Ovary (tissue), 10 donors: ENCODE measurements at regions of chr3 and their contacts with region 1.

Region 1: GRCh38 chr3:110773413-110773954 is 298.1 kb upstream of the NECTIN3 start:
- DNase-seq: no peak
- H3K4me3 ChIP-seq: no peak overlapping the region
- H3K27ac ChIP-seq: no peak overlapping the region
- H3K4me1 ChIP-seq: no peaks in the 10 kb centered on the region
- H3K27me3 ChIP-seq: no peaks in the 10 kb centered on the region
- CTCF ChIP-seq: no peak
- EP300 ChIP-seq: no peak
- POLR2A ChIP-seq: no peak

Region 2: DNA sequence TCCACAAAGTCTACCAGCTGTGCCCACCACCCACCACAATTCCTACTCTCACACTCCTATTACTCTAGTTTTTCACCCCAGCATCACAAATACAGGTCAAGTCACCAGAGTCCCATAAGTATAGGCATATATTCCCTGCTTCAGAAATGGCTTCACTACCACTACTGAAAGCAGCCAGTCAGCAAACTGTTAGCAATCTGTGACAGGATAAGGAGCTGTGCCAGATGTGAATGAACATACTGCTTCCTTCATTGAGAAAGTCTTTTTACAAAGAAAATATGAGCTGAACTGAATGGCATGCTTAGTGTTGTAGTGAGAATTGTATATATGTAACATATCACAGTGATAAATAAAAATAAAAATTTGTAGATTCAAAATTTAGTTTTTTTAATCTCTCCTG is 1560.2 kb before region 1 on chr3:
- intact Hi-C with region 1: no loop called
- DNase-seq: no peak
- H3K4me3 ChIP-seq: no peak overlapping the region
- H3K27ac ChIP-seq: no peak overlapping the region
- H3K4me1 ChIP-seq: no peaks in the 10 kb centered on the region
- H3K27me3 ChIP-seq: peaks cover 3% of the 10 kb centered on the region
- CTCF ChIP-seq: no peak
- EP300 ChIP-seq: no peak
- POLR2A ChIP-seq: no peak

Region 3: GRCh38 chr3:110811050-110811449 is 37.6 kb after region 1 on chr3:
- intact Hi-C with region 1: loop called in 1 of 4 experiments (anchors 1 kb)
- DNase-seq: no peak
- H3K4me3 ChIP-seq: no peak overlapping the region
- H3K27ac ChIP-seq: no peak overlapping the region
- H3K4me1 ChIP-seq: peaks cover 2% of the 10 kb centered on the region
- H3K27me3 ChIP-seq: no peaks in the 10 kb centered on the region
- CTCF ChIP-seq: no peak
- EP300 ChIP-seq: no peak
- POLR2A ChIP-seq: no peak

Region 4: DNA sequence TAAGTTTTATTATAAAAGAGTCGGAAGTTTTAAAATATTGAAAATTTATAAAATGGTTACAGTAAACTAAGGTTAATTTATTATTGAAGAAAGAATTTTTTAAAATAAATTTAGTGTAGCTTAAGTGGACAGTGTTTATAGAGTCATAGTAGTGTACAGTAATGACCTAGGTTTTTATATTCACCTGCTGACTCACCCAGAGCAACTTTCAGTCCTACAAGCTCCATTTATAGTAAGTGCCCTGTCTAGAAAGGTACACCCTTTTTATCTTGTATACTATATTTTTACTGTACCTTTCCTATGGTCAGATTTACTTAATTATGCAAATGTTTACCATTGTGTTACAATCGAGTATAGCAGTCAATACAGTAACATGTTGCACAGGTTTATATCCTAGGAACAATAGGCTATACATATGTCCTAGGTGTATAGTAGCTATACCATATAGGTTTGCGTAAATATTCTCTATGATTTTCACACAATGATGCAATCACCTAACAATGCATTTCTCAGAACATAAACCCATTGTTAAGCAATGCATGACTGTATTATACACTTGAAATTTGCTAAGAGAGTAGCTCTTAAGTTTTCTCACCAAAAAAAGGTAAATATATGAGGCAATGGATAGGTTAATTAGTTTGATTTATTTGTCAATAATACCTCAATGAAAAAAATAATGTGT is 661.6 kb after region 1 on chr3:
- intact Hi-C with region 1: no loop called
- DNase-seq: no peak
- H3K4me3 ChIP-seq: no peak overlapping the region
- H3K27ac ChIP-seq: no peak overlapping the region
- H3K4me1 ChIP-seq: no peaks in the 10 kb centered on the region
- H3K27me3 ChIP-seq: no peaks in the 10 kb centered on the region
- CTCF ChIP-seq: no peak
- EP300 ChIP-seq: no peak
- POLR2A ChIP-seq: no peak

Region 5: GRCh38 chr3:112464264-112464663 is 1690.8 kb after region 1 on chr3:
- intact Hi-C with region 1: no loop called
- DNase-seq: no peak
- H3K4me3 ChIP-seq: no peak overlapping the region
- H3K27ac ChIP-seq: no peak overlapping the region
- H3K4me1 ChIP-seq: no peaks in the 10 kb centered on the region
- H3K27me3 ChIP-seq: no peaks in the 10 kb centered on the region
- CTCF ChIP-seq: no peak
- EP300 ChIP-seq: no peak
- POLR2A ChIP-seq: no peak